ENCODE measurements at regions of chr4 and their contacts with region 1.

Region 1: GRCh38 chr4:118981839-118982381 is 93.3 kb downstream of the SYNPO2 start:
- DNase-seq: peak; percentile 64
- H3K4me3 ChIP-seq: no peak overlapping the region
- H3K27ac ChIP-seq: no peak overlapping the region
- H3K4me1 ChIP-seq: peaks cover 7% of the 10 kb centered on the region
- H3K27me3 ChIP-seq: no peaks in the 10 kb centered on the region
- CTCF ChIP-seq: peak; percentile 56 to 57
- POLR2A ChIP-seq: no peak

Region 2: DNA sequence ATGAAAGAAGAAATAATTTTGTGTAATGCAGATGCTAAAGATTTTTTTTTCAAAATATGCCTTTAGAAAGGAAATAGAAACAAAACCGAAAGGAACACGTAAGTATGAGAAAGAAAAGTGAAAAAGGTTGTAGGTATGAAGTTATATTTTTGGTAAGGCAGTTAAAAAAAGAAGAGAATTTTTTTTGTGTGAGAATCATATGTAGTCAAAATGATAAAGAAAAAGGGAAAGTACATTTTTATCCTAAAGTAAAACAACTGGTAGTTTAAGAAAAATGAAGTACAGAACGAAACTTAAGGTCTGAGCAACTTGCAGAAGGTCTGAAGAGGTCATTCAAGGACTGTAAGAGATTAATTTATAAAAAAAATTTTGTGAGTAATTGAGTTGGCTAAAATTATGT is 1732.6 kb before region 1 on chr4:
- CTCF ChIA-PET with region 1: no interaction called
- POLR2A ChIA-PET with region 1: no interaction called
- dilution Hi-C with region 1: no loop called
- intact Hi-C with region 1: no loop called
- DNase-seq: no peak
- H3K4me3 ChIP-seq: no peak overlapping the region
- H3K27ac ChIP-seq: no peak overlapping the region
- H3K4me1 ChIP-seq: no peaks in the 10 kb centered on the region
- H3K27me3 ChIP-seq: no peaks in the 10 kb centered on the region
- CTCF ChIP-seq: no peak
- POLR2A ChIP-seq: no peak

Region 3: DNA sequence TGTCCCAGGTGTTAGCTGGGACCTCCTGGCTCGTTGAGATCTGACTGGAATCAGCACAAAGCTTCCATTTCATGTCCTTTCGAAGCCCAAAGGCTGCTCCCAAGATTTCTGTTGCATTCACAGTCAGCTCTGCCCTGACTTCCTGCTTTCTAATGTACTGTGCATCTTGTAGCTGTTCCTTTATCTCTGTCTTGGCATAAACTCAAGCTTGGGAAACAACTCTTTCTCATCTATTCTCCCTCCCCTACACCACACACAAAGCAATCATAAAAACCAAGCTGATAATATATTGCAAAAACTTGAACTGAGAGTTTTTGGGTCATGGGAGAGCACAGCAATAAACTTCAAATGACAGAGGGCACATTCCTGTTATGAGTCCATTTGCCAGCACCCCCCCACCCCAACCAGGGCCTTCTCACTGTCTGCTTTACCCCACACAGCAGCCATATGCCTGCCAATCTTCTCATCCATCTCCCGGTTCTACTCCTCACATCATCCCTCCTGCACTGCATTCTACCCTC is 17.0 kb before region 1 on chr4:
- CTCF ChIA-PET with region 1: no interaction called
- POLR2A ChIA-PET with region 1: no interaction called
- dilution Hi-C with region 1: no loop called
- intact Hi-C with region 1: no loop called
- DNase-seq: no peak
- H3K4me3 ChIP-seq: no peak overlapping the region
- H3K27ac ChIP-seq: no peak overlapping the region
- H3K4me1 ChIP-seq: no peaks in the 10 kb centered on the region
- H3K27me3 ChIP-seq: peaks cover 0 to 2% of the 10 kb centered on the region in 2 experiments
- CTCF ChIP-seq: no peak
- POLR2A ChIP-seq: no peak

Region 4: GRCh38 chr4:119025440-119025839 is 43.5 kb after region 1 on chr4:
- CTCF ChIA-PET with region 1: no interaction called
- POLR2A ChIA-PET with region 1: no interaction called
- dilution Hi-C with region 1: no loop called
- intact Hi-C with region 1: no loop called
- DNase-seq: no peak
- H3K4me3 ChIP-seq: no peak overlapping the region
- H3K27ac ChIP-seq: no peak overlapping the region
- H3K4me1 ChIP-seq: peaks cover 5% of the 10 kb centered on the region
- H3K27me3 ChIP-seq: no peaks in the 10 kb centered on the region
- CTCF ChIP-seq: no peak
- POLR2A ChIP-seq: no peak

Region 5: DNA sequence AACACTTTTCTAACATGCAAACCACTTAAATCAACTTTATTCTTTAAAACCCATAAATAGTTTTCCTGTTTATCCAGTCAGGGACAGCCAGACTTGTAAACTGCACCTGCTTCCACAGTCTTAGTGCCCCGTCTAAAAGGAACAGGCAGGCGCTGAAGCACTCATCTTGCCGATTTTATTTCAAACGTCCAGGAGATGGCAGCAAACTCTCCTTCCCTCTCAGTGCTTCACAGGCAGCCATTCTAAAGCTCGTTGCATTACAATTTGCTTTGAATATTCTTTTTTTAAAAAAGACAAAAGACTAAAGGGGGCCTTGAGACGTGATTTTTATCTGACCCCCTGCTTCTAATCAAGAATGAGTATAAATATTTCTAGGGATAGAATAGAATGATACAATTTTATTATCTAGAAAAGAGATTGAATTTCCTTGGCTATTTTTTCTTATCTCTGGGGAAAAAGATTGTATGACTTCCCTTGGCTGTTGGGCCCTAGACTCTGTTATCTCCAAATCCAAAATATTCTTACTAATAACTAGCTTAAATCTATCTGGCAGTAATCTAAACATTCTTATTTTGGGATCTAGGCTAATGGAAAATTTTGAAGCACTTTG is 60.1 kb after region 1 on chr4:
- CTCF ChIA-PET with region 1: no interaction called
- POLR2A ChIA-PET with region 1: no interaction called
- dilution Hi-C with region 1: no loop called
- intact Hi-C with region 1: loop called (anchors 2 kb)
- DNase-seq: peak; percentile 86
- H3K4me3 ChIP-seq: no peak overlapping the region
- H3K27ac ChIP-seq: no peak overlapping the region
- H3K4me1 ChIP-seq: peaks cover 15% of the 10 kb centered on the region
- H3K27me3 ChIP-seq: no peaks in the 10 kb centered on the region
- CTCF ChIP-seq: peak; percentile 50
- POLR2A ChIP-seq: no peak

Region 6: DNA sequence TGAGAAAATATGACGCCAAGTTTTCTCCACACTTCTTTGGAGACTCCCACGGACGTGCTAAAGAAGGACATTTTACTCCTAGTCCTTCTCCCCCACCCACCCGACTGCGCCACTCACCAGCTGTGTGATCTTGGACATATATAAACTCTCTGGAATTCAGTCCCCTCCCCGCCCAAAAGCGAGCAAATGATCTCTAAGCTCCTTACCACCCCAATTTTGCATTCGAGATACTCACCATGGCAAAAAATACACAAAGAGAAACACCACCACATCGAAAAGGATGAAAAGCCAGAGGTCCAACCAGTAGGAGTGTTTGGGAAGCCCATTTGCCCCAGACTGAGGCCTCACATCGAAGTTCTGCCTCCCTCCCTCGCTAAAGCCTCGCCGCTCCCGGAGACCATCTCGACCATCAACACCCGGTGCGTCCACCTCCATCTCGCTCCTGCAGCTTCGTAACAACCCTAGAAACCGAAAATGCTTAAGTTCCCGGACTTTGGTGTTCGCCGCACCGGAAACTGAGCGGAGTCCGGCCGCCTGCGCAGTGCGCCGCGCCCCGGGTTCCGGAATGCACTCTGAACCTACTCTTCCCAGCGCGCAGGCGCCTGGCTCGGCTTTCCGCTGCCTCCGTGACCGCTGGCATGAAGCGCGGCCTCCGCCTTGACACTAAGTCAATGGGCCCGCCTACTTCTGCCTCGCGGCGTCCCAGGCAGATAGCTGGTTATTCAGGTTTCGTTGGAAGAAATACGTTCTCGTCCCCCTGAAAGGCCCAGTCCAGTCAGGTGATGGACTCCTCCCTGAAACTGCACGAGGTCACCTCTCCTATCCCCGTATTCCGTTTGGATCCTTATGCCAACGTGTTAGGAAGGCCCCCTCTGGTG is 318.4 kb after region 1 on chr4:
- CTCF ChIA-PET with region 1: interaction called, 11 read pairs
- POLR2A ChIA-PET with region 1: no interaction called
- dilution Hi-C with region 1: no loop called
- intact Hi-C with region 1: no loop called
- DNase-seq: peak; percentile 89
- H3K4me3 ChIP-seq: peak overlapping the region; percentile 49 to 82 (median 76)
- H3K27ac ChIP-seq: peak overlapping the region; percentile 60
- H3K4me1 ChIP-seq: peaks cover 12% of the 10 kb centered on the region
- H3K27me3 ChIP-seq: no peaks in the 10 kb centered on the region
- CTCF ChIP-seq: peak in 1 of 2 donors; percentile 1
- POLR2A ChIP-seq: peak; percentile 78

Region 7: DNA sequence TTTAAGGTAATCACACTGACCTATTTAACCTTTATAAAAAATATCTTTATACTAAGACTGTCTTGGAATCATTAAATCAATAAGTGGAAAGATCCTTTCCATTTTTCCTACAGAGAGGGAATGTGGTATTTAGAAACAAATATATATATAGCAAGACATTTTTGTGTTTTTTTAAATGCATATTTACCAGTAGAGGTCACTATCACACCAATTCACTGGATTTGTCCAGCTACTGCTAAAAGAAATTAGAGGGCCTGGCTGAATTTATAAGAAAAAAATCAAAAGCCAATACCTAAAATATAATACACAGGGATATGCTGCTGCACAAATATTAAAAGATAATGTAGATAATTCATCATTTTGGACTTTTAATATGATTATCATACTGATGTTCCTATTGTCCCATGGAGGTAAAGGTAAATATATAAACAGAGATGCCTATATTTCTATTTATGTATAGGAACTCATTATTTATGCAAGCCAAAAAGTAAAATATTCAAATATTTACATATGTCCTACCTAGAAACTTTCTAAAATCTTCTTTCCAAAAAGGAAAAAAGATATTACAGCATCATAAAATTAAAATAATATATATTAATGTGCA is 577.2 kb after region 1 on chr4:
- CTCF ChIA-PET with region 1: interaction called, 3 read pairs
- POLR2A ChIA-PET with region 1: no interaction called
- dilution Hi-C with region 1: no loop called
- intact Hi-C with region 1: loop called (anchors 5 kb)
- DNase-seq: peak; percentile 61
- H3K4me3 ChIP-seq: no peak overlapping the region
- H3K27ac ChIP-seq: no peak overlapping the region
- H3K4me1 ChIP-seq: no peaks in the 10 kb centered on the region
- H3K27me3 ChIP-seq: no peaks in the 10 kb centered on the region
- CTCF ChIP-seq: peak; percentile 10 to 17
- POLR2A ChIP-seq: no peak

Region 8: DNA sequence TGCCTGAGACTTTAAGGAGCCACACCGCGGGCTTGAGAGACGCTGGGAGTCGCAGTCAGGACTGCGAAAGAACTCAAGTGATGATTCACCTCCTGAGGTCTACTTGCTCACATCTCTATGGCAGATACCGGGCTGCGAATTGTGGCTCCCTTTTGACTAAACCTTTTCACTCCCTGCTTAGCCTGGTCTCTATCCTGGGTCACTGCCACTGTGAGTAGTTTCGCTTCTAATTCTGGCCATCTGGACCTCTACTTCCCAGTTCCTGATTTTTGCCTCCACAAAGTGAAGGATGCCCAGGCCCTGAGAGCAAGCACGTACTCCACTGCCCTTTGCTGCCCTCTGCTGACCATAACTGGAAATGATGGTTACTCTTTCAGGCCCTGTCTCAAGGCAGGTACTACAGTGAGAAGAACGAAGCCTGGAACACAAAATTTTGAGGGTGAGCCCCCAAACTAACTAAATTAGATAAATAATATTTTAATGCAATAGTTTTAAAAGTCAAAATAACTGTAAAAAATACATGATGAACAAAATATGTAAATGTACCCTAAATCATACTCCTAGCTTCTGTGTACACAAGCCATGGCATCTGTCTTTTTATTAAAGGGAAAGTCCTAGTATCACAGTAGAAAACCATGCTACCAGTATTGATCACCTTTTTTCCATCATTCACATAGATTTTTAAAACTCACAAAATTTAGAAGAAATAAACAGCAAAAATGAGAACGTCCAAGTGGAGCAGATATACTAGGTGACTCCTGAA is 1068.0 kb after region 1 on chr4:
- CTCF ChIA-PET with region 1: interaction called, 4 read pairs
- POLR2A ChIA-PET with region 1: no interaction called
- dilution Hi-C with region 1: no loop called
- intact Hi-C with region 1: loop called (anchors 1 kb)
- DNase-seq: peak; percentile 76
- H3K4me3 ChIP-seq: no peak overlapping the region
- H3K27ac ChIP-seq: no peak overlapping the region
- H3K4me1 ChIP-seq: peaks cover 3% of the 10 kb centered on the region
- H3K27me3 ChIP-seq: no peaks in the 10 kb centered on the region
- CTCF ChIP-seq: peak; percentile 77 to 79
- POLR2A ChIP-seq: no peak

Region 9: GRCh38 chr4:120718979-120719566 is 1737.2 kb after region 1 on chr4:
- CTCF ChIA-PET with region 1: no interaction called
- POLR2A ChIA-PET with region 1: no interaction called
- dilution Hi-C with region 1: no loop called
- intact Hi-C with region 1: no loop called
- DNase-seq: peak; percentile 49
- H3K4me3 ChIP-seq: no peak overlapping the region
- H3K27ac ChIP-seq: no peak overlapping the region
- H3K4me1 ChIP-seq: no peaks in the 10 kb centered on the region
- H3K27me3 ChIP-seq: no peaks in the 10 kb centered on the region
- CTCF ChIP-seq: peak; percentile 45 to 75
- POLR2A ChIP-seq: no peak

Measured in endothelial cell of umbilical vein (primary cell).